ENCODE measurements at regions of chr7 and their contacts with region 1.

Region 1: GRCh38 chr7:42700406-42701327 is 211.2 kb downstream of the C7orf25 start:
- DNase-seq: no peak
- ATAC-seq: no peak
- H3K4me3 ChIP-seq: no peak overlapping the region
- H3K27ac ChIP-seq: no peak overlapping the region
- H3K4me1 ChIP-seq: peaks cover 0 to 4% of the 10 kb centered on the region in 2 experiments; a peak in 2 of 5 replicates
- H3K27me3 ChIP-seq: no peaks in the 10 kb centered on the region
- CTCF ChIP-seq: no peak
- EP300 ChIP-seq: no peak
- POLR2A ChIP-seq: no peak
- RAD21 ChIP-seq: no peak

Region 2: DNA sequence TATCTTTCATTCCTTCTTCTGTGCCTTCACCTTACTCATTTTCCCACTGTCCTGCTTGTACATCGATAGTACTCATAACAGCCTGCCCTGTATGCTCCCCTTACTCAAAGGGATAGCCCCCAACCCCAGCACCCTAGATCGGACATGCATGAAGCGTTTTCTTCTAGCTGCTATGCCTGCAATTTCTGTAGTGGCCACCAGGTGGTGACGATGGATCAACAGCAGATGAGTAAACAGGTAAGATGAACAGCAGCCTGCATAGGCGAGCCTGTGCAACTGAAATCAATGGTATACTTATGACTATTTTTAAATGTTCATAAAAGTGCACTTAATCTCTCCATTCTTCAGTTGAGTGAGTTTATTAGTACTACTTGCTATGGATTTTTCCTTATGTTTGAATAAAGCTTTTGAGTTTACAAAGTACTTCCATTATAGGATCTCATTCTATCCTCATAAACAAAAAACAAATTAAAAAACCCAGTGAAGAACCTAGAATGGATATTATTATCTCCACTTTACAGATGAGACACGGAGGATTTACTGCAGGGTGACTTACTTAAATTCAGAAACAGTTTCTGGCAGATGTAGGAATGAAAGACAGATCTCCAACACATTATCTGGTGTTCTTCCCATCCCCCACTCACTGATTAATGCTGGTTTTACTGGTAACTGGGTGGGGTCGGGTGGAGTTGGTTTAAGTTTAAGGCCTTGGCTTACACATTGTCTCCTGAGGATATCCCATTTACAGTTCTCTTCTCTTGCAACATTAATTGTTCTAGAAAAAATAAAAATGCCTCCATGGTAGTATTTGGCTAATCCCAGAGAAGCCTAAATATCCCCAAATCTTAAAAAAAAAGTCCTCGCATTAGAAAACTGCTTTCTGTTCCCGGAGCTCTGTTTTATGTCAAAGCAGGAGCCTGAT is 685.8 kb before region 1 on chr7:
- CTCF ChIA-PET with region 1: no interaction called
- POLR2A ChIA-PET with region 1: no interaction called
- in situ Hi-C with region 1: no loop called
- intact Hi-C with region 1: loop called (anchors 10 kb)
- DNase-seq: peak; percentile 40 to 66 (median 62)
- ATAC-seq: peak; percentile 76; the same call in 2 of the 3 replicates
- H3K4me3 ChIP-seq: no peak overlapping the region
- H3K27ac ChIP-seq: no peak overlapping the region
- H3K4me1 ChIP-seq: no peaks in the 10 kb centered on the region
- H3K27me3 ChIP-seq: no peaks in the 10 kb centered on the region
- CTCF ChIP-seq: peak; percentile 59 to 81 (median 71)
- EP300 ChIP-seq: no peak
- POLR2A ChIP-seq: no peak
- RAD21 ChIP-seq: peak; percentile 53 to 73

Region 3: GRCh38 chr7:42770106-42770505 is 69.4 kb after region 1 on chr7:
- CTCF ChIA-PET with region 1: no interaction called
- POLR2A ChIA-PET with region 1: no interaction called
- in situ Hi-C with region 1: no loop called
- intact Hi-C with region 1: no loop called
- DNase-seq: no peak
- ATAC-seq: no peak
- H3K4me3 ChIP-seq: no peak overlapping the region
- H3K27ac ChIP-seq: no peak overlapping the region
- H3K4me1 ChIP-seq: no peaks in the 10 kb centered on the region
- H3K27me3 ChIP-seq: 0 out of 5 replicates have a peak, but pooled peaks cover 0 to 6% of the 10 kb centered on the region in 2 experiments
- CTCF ChIP-seq: no peak
- EP300 ChIP-seq: no peak
- POLR2A ChIP-seq: no peak
- RAD21 ChIP-seq: no peak